CD4-positive, alpha-beta memory T cell (primary cell): ENCODE measurements at regions of chr3 and their contacts with region 1.

Region 1: GRCh38 chr3:50568947-50569749 is at the start of gene HEMK1:
- DNase-seq: peak; percentile 90 to 92 (median 91)
- H3K4me3 ChIP-seq: peak within 1 kb of the TSS; percentile 88 to 93
- H3K4me3 Mint-ChIP-seq: peak within 1 kb of the TSS; percentile 93 to 98 (median 96)
- H3K27ac ChIP-seq: peak within 1 kb of the TSS; percentile 83
- H3K27ac Mint-ChIP-seq: peak within 1 kb of the TSS; percentile 92 to 100 (median 98)
- H3K4me1 ChIP-seq: peaks cover 71% of the 10 kb centered on the region
- H3K4me1 Mint-ChIP-seq: peaks cover 45 to 83% (median 57%) of the 10 kb centered on the region in 4 donors
- H3K27me3 ChIP-seq: no peaks in the 10 kb centered on the region
- H3K27me3 Mint-ChIP-seq: no peaks in the 10 kb centered on the region
- total RNA-seq, gene HEMK1: 55.3 to 56.7 TPM

Region 2: DNA sequence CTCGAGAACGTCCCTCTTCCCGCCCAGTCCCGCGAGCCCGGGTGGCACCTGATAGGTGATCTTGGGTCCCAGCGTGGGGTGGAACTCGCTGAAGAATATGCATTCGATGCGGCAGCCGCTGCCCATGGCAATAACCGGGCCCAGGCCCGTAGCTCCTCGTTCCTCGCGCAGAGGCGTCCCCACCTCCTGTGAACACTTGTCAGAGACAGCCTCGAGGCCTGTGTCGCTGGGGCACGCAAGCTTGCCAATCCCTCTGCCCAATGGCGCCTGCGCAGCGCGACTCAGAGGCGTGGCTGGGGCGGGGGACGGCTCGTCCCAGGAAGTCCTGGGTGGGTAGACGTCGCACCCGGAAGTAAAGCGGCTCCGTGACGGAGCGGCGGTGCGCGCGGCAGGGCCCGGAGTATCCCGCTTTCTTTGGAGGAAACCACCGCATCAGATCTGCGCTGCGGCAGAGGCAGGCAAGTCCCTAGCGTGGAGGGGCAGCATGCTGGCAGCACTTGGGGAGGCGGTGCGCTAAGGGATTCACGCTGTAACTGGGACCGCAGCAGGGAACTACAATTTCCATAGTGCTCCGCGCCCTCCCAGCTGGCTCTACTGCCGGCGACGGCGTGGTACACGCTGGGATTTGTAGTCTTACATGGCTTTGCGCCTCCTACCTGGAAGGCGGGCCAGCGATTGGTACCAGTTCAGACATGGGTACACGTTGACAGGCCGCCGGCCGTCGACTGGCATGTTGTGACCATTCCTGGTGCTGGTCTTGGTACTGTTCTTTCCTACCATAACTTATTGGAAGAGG is 218.4 kb before region 1 on chr3 and contains the starts of genes CYB561D2 and NPRL2:
- CTCF ChIA-PET with region 1: interaction called, 8 read pairs
- POLR2A ChIA-PET with region 1: interaction called, 59 read pairs
- intact Hi-C with region 1: no loop called
- DNase-seq: peak; percentile 99 to 100 (median 99)
- H3K4me3 ChIP-seq: peak within 1 kb of the TSS; percentile 66 to 98
- H3K4me3 Mint-ChIP-seq: peak within 1 kb of the TSS; percentile 91 to 99 (median 96)
- H3K27ac ChIP-seq: peak within 1 kb of the TSS; percentile 94
- H3K27ac Mint-ChIP-seq: peak within 1 kb of the TSS; percentile 96 to 99 (median 99)
- H3K4me1 ChIP-seq: peaks cover 58% of the 10 kb centered on the region
- H3K4me1 Mint-ChIP-seq: peaks cover 28 to 78% (median 53%) of the 10 kb centered on the region in 4 donors
- H3K27me3 ChIP-seq: no peaks in the 10 kb centered on the region
- H3K27me3 Mint-ChIP-seq: no peaks in the 10 kb centered on the region
- total RNA-seq, gene CYB561D2: 39.6 to 40.0 TPM
- total RNA-seq, gene NPRL2: 50.0 to 53.0 TPM

Region 3: DNA sequence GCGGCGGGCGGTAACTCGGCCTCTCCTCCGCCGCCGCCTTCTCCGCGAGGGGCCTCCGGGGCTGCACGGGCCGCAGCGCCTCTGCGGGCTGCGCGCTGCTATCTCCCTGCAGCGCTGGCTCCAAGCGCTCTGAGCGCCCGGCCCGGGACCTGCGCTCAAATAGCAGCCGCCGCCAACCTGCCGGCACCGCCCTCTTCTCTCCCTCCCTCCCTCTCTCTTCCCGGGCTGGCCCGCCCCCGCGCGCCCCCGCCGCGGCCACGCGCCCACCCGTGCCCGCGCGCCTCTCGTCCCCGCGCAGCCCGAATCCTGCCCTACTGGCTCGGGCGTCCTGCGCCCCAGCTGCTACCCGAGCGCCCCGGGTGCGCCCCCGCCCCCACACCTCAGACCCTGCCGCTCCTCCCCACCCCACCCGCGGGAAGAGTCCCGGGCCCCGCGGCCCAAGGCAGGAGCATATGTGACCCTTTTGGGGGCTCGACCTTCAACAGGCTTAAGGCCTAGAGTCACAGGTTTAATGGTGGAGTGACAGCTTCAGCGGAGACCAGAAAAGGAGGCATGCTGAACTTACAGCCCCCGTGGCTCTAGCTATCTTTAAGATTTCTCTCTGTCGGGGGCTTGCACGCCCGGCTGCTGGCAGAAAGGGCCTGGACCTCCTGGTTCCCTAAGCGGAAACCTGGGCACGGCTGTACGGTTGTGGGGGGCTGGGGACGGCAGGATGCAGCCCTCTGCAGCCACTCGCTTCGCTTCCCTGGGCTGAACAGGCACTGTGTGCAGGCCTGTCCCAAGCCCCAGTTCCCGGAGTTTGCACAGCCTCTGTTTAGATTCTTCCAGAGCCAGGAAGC is 65.4 kb before region 1 on chr3 and contains the start of gene CACNA2D2:
- CTCF ChIA-PET with region 1: no interaction called
- POLR2A ChIA-PET with region 1: no interaction called
- intact Hi-C with region 1: no loop called
- DNase-seq: peak; percentile 70 to 76 (median 71)
- H3K4me3 ChIP-seq: peak within 1 kb of the TSS in 1 of 2 donors; percentile 32
- H3K4me3 Mint-ChIP-seq: peak within 1 kb of the TSS; percentile 69 to 85 (median 74)
- H3K27ac ChIP-seq: no peak within 1 kb of the TSS
- H3K27ac Mint-ChIP-seq: peak within 1 kb of the TSS in 1 of 7 donors; percentile 54
- H3K4me1 ChIP-seq: peaks cover 9% of the 10 kb centered on the region
- H3K4me1 Mint-ChIP-seq: peaks cover 2 to 18% (median 9%) of the 10 kb centered on the region in 4 donors
- H3K27me3 ChIP-seq: no peaks in the 10 kb centered on the region
- H3K27me3 Mint-ChIP-seq: peaks cover 6 to 13% of the 10 kb centered on the region in 2 donors
- total RNA-seq, gene CACNA2D2: 1.7 to 1.9 TPM

Region 4: DNA sequence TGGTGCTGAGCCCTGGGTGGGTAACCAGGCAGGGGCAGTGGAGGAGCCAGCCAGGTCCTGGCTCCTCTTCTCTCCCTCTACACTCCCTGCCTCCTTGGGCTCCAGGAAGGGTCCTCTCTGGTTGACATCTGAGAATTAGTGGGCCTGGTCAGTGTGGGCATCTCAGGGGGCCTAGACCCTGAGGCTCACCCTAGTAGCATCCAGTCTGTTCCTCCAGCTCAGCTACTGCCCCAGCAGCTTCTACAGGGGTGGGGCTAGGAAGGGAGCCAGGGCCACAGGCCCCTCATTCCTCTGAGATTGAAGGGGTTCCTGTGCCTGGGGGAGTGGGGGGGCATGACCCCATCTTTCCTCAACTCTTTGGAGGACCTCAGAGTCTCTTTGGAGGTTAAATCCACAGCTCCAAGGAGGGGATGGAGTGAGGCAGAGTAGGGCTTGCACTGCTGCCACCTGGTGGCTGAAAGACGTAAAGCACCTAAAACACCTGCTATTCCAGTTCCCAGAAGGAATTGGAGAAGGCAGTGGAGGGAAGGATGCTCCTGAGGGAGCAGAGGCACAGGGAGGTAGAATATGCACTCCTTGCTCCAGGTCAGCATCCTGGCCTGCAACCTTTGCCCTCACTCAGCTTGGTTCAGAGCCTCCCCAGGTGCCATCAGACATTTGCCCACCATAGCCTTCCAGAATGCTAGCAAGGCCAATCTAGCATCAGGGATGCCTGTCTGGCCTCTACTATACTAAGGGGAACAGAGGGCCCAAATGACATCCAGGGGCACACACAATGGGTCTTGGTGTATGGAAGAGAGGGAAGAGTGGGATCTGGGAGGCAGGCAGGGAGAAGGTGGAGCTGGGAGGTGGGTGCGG is 26.7 kb before region 1 on chr3:
- CTCF ChIA-PET with region 1: interaction called, 13 read pairs
- POLR2A ChIA-PET with region 1: interaction called, 4 read pairs
- intact Hi-C with region 1: no loop called
- DNase-seq: peak; percentile 48 to 65 (median 52)
- H3K4me3 ChIP-seq: no peak overlapping the region
- H3K4me3 Mint-ChIP-seq: peak overlapping the region in 1 of 8 donors; percentile 15
- H3K27ac ChIP-seq: no peak overlapping the region
- H3K27ac Mint-ChIP-seq: no peak overlapping the region
- H3K4me1 ChIP-seq: no peaks in the 10 kb centered on the region
- H3K4me1 Mint-ChIP-seq: no peaks in the 10 kb centered on the region
- H3K27me3 ChIP-seq: no peaks in the 10 kb centered on the region
- H3K27me3 Mint-ChIP-seq: peaks cover 3% of the 10 kb centered on the region in 2 donors

Region 5: GRCh38 chr3:50580683-50581458 is 11.7 kb after region 1 on chr3:
- CTCF ChIA-PET with region 1: interaction called, 277 read pairs
- POLR2A ChIA-PET with region 1: interaction called, 276 read pairs
- intact Hi-C with region 1: no loop called
- DNase-seq: peak in 2 of 5 donors; percentile 20 to 30
- H3K4me3 ChIP-seq: peak overlapping the region in 1 of 2 donors; percentile 10
- H3K4me3 Mint-ChIP-seq: peak overlapping the region in 3 of 8 donors; percentile 26 to 43 (median 35)
- H3K27ac ChIP-seq: peak overlapping the region; percentile 13
- H3K27ac Mint-ChIP-seq: peak overlapping the region in 6 of 7 donors; percentile 52 to 89 (median 63)
- H3K4me1 ChIP-seq: peaks cover 45% of the 10 kb centered on the region
- H3K4me1 Mint-ChIP-seq: peaks cover 21 to 62% (median 33%) of the 10 kb centered on the region in 4 donors
- H3K27me3 ChIP-seq: no peaks in the 10 kb centered on the region
- H3K27me3 Mint-ChIP-seq: no peaks in the 10 kb centered on the region

Region 6: GRCh38 chr3:50652709-50653108 is 83.6 kb after region 1 on chr3:
- CTCF ChIA-PET with region 1: interaction called, 23 read pairs
- POLR2A ChIA-PET with region 1: interaction called, 9 read pairs
- intact Hi-C with region 1: loop called (anchors 1 kb)
- DNase-seq: peak in 4 of 5 donors; percentile 40 to 54 (median 50)
- H3K4me3 ChIP-seq: no peak overlapping the region
- H3K4me3 Mint-ChIP-seq: no peak overlapping the region
- H3K27ac ChIP-seq: no peak overlapping the region
- H3K27ac Mint-ChIP-seq: peak overlapping the region in 1 of 7 donors; percentile 76
- H3K4me1 ChIP-seq: no peaks in the 10 kb centered on the region
- H3K4me1 Mint-ChIP-seq: peaks cover 0 to 6% (median under 1%) of the 10 kb centered on the region in 4 donors
- H3K27me3 ChIP-seq: no peaks in the 10 kb centered on the region
- H3K27me3 Mint-ChIP-seq: no peaks in the 10 kb centered on the region